RWPE1 (cell line): ENCODE measurements at regions of chr5 and their contacts with region 1.

Region 1: DNA sequence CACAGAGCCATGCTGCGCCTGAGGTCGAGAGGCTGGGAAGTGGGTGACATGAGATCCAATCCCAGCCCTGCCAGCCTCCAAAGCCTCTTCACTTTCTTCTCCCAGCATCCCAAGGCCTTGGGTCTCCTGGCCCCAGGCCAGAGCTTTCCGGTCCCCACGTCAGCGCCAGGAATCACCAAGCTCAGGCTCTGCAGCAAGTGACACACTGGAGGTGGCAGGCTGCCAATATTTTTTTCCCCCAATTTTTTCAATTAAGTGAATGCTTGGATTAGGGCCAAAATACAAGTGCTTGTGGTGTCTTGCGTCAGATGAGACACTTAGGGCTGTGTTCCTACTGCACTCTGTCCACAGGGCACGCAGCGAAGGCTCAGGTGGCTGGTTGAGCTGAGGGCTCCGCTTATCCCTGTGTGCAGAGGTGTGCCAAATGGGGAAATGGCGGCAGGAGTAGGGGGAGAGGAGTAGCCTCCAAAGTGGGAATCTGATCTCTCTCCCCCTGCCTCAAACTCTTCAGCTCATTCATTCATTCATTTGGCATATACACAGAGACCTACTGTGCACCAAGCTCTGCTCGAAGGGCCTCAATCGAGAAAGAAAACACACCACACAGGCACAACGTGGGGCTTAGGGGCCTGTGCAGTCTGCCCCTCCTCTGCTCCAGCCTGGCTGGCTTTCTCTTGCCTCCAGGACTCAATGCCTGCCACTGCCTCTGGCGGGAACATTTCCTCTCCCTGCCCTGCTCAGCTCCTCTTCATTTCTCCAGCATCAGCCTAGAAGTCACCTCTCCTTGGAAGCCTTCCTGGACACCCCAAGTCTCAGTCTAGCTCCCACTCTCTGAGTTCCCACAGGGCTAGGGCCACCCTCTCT is 16.6 kb downstream of the SH3PXD2B start:
- DNase-seq: peak; percentile 83
- H3K27ac ChIP-seq: peak overlapping the region; percentile 63
- CTCF ChIP-seq: no peak

Region 2: DNA sequence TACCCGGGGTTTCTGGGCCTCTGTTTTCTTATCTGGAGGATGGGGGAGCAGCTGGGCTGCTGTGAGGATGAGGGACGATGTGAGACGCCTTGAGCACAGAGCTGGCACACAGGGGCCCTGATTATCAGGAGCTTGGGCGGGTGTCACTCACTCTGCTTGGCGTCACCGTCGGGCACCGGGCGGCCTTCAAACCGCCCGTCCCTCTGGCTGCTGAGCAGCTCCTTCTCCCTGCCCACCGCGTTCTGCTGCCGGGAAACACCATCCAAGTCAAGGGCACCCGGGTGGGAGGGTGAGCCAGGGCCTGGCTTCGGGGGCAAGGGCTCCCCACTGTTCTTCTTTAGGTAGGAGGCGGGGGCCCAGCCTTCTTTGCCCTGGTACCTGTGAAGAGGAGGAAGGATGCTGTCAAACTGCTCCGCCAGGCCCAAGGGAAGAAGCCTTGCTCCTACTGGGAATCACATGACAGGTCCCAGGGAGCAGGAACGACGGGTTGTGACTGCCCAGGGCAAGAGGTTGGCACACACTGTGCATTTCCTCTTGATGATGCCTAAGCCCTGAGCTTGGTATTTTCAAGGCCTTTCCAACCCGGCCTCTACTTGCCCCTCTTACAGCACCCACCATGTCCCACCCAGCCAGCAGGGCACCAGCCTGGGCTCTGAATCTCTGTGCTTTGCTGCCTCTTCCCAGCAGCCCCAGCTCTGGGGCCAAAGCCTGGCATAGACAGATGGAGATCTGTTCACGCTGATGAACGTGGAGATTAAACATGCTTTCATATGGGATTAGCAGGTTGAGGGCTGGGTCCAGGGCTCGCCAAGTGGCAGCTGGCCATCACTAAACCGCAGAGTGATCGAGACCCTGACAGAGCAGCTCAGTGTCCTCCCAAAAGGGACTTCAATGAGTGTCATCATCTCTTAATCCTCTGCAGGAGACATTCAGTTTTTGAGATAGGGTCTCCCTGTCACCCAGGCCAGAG is 87.2 kb before region 1 on chr5:
- CTCF ChIA-PET with region 1: interaction called, 10 read pairs
- POLR2A ChIA-PET with region 1: no interaction called
- DNase-seq: no peak
- H3K27ac ChIP-seq: no peak overlapping the region
- CTCF ChIP-seq: no peak

Region 3: DNA sequence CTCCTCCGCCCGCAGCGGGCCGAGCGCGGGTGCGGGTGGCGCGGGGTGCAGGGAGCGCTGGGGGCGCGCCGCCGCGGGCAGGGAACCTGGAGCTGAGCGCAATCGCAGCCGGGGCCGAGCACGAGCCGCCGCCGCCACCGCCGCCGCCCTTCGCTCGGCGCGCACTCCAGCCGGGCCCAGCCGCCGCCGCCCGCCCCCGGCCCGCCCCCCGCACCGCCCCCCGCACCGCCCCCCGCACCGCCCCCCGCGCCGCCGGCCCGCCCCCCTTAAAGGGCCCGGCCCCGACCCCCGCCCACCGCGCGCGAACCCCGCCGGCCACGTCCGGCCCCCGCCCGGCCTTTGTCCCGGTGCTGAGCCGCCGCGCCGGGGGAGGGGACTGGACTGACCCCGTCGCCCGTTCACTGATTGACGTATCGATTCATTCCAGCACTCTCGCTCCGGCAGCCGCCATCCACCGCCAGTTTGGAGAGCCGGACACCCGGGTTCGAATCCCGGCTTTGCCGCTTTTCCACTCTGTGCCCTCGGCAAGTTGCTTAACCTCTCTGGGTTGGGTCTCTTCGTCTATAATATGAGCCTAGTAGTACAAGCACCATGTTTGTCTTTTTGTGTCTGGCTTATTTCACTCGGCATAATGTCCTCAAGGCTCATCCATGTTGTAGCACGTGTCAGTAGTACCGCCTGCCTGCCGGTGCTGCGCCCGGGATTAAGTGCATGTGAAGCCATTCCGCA is 16.8 kb after region 1 on chr5 and contains the start of gene SH3PXD2B:
- CTCF ChIA-PET with region 1: interaction called, 42 read pairs
- POLR2A ChIA-PET with region 1: no interaction called
- DNase-seq: peak; percentile 72
- H3K27ac ChIP-seq: peak within 1 kb of the TSS; percentile 97
- CTCF ChIP-seq: no peak

Region 4: DNA sequence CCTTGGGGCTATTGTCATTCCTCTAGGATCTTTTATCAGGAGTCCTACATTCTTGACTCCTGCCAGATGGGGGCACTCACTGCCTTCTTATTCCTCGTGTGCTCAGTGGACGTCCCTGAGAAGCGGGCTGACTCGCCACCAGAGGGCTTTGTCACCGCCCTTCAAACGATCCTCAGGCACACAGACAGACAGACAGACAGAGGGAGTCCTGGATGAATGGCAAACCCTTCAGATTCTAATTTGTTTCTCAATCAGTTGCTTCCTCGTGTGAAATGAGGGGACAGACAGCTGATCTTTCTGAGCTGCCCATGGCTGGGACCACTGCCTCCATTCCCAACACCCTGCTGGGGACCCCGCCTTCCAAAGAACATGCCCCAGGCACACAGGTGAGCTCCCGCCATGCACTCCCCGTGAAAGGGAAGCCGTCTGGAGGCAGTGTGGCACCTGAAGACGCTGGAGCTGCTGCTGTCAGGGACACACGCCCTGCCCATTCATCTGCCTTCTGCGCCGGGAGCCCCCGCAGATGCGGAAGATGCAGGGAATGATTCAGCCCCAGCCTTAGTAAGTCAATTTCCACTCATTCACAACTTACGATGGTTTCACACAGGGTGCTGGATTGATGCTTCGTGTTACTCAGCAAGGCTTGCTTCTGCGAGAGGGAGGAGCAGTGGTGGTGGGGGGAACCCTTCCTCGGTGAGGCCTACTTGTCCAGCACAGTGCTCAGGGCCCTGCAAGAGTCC is 41.5 kb after region 1 on chr5:
- CTCF ChIA-PET with region 1: no interaction called
- POLR2A ChIA-PET with region 1: no interaction called
- DNase-seq: peak; percentile 95
- H3K27ac ChIP-seq: no peak overlapping the region
- CTCF ChIP-seq: peak; percentile 88